HCT116 (cell line): ENCODE measurements at regions of chr12 and their contacts with region 1.

Region 1: GRCh38 chr12:123983822-123984485 is 10.9 kb downstream of the ZNF664 start:
- DNase-seq: peak; percentile 60
- ATAC-seq: peak; percentile 96
- H3K4me3 ChIP-seq: no peak overlapping the region
- H3K27ac ChIP-seq: no peak overlapping the region
- H3K4me1 ChIP-seq: no peaks in the 10 kb centered on the region
- H3K27me3 ChIP-seq: no peaks in the 10 kb centered on the region
- CTCF ChIP-seq: peak; percentile 67 to 75 (median 73); a peak in 5 of 6 replicates
- POLR2A ChIP-seq: no peak
- RAD21 ChIP-seq: peak; percentile 84

Region 2: GRCh38 chr12:123801573-123802178 is 182.3 kb before region 1 on chr12:
- CTCF ChIA-PET with region 1: interaction called, 9 read pairs
- POLR2A ChIA-PET with region 1: no interaction called
- RAD21 ChIA-PET with region 1: no interaction called
- intact Hi-C with region 1: loop called (anchors 5 kb)
- DNase-seq: peak; percentile 26
- ATAC-seq: peak; percentile 27; the same call in 1 of the 2 replicates
- H3K4me3 ChIP-seq: no peak overlapping the region
- H3K27ac ChIP-seq: no peak overlapping the region
- H3K4me1 ChIP-seq: no peaks in the 10 kb centered on the region
- H3K27me3 ChIP-seq: no peaks in the 10 kb centered on the region
- CTCF ChIP-seq: peak; percentile 36 to 77 (median 51)
- POLR2A ChIP-seq: no peak
- RAD21 ChIP-seq: peak; percentile 75

Region 3: GRCh38 chr12:123905319-123905925 is 78.5 kb before region 1 on chr12:
- CTCF ChIA-PET with region 1: interaction called, 10 read pairs
- POLR2A ChIA-PET with region 1: no interaction called
- RAD21 ChIA-PET with region 1: no interaction called
- intact Hi-C with region 1: loop called (anchors 1 kb)
- DNase-seq: peak; percentile 51
- ATAC-seq: peak; percentile 70
- H3K4me3 ChIP-seq: no peak overlapping the region
- H3K27ac ChIP-seq: no peak overlapping the region
- H3K4me1 ChIP-seq: peaks cover 20 to 34% of the 10 kb centered on the region in 2 experiments
- H3K27me3 ChIP-seq: no peaks in the 10 kb centered on the region
- CTCF ChIP-seq: peak; percentile 68 to 92 (median 77)
- POLR2A ChIP-seq: no peak
- RAD21 ChIP-seq: peak; percentile 56

Region 4: DNA sequence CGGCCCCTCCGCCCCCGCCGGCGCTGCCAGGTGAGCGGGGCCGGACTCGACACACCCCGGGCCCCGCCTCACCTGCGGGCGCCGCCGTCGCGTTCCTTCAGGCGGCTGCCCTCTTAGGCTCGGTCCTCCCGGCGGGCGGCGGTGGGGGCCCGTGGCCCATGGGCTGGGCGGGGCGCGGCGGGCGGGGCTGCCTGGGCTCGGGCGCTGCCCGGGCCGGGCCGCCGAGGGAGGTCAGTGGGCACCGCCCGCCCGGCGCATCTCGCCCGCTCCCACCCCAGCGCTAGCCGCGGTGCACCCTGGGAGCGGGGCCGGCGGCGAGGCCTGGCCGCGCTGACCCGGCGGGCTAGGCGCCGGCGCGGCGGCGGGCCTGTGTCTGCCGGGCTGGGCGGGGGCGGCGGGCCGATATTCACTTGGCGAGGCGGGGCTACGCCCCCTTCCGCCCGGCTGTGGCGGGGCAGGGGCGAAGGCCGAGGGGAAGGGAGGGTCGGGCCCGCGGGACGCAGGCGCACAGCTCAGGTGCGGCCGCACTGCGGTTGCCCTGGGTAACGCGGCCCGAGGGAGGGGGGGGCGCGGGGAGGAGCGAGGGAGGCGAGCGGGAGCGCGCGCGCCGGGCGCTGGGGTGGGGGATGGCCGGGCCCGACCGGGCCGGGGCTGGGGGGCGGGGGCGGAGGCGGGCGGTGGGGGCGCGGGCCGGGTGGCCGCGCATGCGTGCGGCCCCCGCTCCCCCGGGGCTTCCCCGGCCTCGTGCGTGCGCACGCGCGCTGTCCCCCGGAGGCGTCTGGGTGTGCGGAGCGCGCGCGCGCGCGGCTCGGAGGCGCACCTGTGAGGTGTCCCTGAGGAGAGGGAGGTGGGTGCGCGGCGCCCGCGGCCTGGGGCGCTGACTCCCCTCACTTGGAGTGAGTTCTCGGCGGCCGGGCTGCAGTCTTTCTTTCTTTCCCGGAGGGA is 11.2 kb before region 1 on chr12 and contains the starts of genes CCDC92 and ZNF664:
- CTCF ChIA-PET with region 1: no interaction called
- POLR2A ChIA-PET with region 1: no interaction called
- RAD21 ChIA-PET with region 1: no interaction called
- intact Hi-C with region 1: no loop called
- DNase-seq: peak; percentile 83
- ATAC-seq: peak; percentile 85
- H3K4me3 ChIP-seq: peak within 1 kb of the TSS; percentile 68 to 85
- H3K27ac ChIP-seq: peak within 1 kb of the TSS; percentile 81
- H3K4me1 ChIP-seq: peaks cover 10 to 15% of the 10 kb centered on the region in 2 experiments; a peak in 3 of 4 replicates
- H3K27me3 ChIP-seq: no peaks in the 10 kb centered on the region
- CTCF ChIP-seq: 0 out of 6 replicates have a peak, but pooled peaks of 1 of the 3 experiments have one; percentile 17
- POLR2A ChIP-seq: peak; percentile 72
- RAD21 ChIP-seq: no peak
- total RNA-seq, gene CCDC92: 9.7 TPM
- total RNA-seq, gene ZNF664: 124 TPM

Region 5: GRCh38 chr12:124347716-124348357 is 363.9 kb after region 1 on chr12:
- CTCF ChIA-PET with region 1: no interaction called
- POLR2A ChIA-PET with region 1: no interaction called
- RAD21 ChIA-PET with region 1: no interaction called
- intact Hi-C with region 1: no loop called
- DNase-seq: no peak
- ATAC-seq: peak; percentile 62
- H3K4me3 ChIP-seq: no peak overlapping the region
- H3K27ac ChIP-seq: no peak overlapping the region
- H3K4me1 ChIP-seq: no peaks in the 10 kb centered on the region
- H3K27me3 ChIP-seq: no peaks in the 10 kb centered on the region
- CTCF ChIP-seq: peak; percentile 45 to 68 (median 59); a peak in 5 of 6 replicates
- POLR2A ChIP-seq: no peak
- RAD21 ChIP-seq: peak; percentile 65